Astrocyte of the cerebellum (primary cell): ENCODE measurements at regions of chr1 and their contacts with region 1.

Region 1: GRCh38 chr1:241531195-241532161 is 700 bp upstream of the KMO start:
- DNase-seq: peak; percentile 68
- H3K4me3 ChIP-seq: peak overlapping the region; percentile 30
- CTCF ChIP-seq: peak; percentile 20

Region 2: GRCh38 chr1:241566651-241567050 is 35.2 kb after region 1 on chr1:
- in situ Hi-C with region 1: no loop called
- DNase-seq: no peak
- H3K4me3 ChIP-seq: no peak overlapping the region
- CTCF ChIP-seq: no peak

Region 3: GRCh38 chr1:241847796-241848685 is 316.6 kb after region 1 on chr1 and contains the start of gene EXO1:
- in situ Hi-C with region 1: loop called (anchors 25 kb)
- DNase-seq: peak; percentile 83
- H3K4me3 ChIP-seq: peak within 1 kb of the TSS; percentile 93
- CTCF ChIP-seq: peak; percentile 48